PC-9 (cell line): ENCODE measurements at regions of chr22 and their contacts with region 1.

Region 1: GRCh38 chr22:50200461-50201190 is at the start of gene SELENOO:
- DNase-seq: peak; percentile 82 to 89
- H3K4me3 ChIP-seq: peak within 1 kb of the TSS; percentile 89
- H3K27ac ChIP-seq: no peak within 1 kb of the TSS
- H3K4me1 ChIP-seq: peaks cover 12% of the 10 kb centered on the region
- H3K27me3 ChIP-seq: no peaks in the 10 kb centered on the region
- CTCF ChIP-seq: no peak
- total RNA-seq, gene SELENOO: 27.4 and 36.2 TPM in 2 replicates

Region 2: DNA sequence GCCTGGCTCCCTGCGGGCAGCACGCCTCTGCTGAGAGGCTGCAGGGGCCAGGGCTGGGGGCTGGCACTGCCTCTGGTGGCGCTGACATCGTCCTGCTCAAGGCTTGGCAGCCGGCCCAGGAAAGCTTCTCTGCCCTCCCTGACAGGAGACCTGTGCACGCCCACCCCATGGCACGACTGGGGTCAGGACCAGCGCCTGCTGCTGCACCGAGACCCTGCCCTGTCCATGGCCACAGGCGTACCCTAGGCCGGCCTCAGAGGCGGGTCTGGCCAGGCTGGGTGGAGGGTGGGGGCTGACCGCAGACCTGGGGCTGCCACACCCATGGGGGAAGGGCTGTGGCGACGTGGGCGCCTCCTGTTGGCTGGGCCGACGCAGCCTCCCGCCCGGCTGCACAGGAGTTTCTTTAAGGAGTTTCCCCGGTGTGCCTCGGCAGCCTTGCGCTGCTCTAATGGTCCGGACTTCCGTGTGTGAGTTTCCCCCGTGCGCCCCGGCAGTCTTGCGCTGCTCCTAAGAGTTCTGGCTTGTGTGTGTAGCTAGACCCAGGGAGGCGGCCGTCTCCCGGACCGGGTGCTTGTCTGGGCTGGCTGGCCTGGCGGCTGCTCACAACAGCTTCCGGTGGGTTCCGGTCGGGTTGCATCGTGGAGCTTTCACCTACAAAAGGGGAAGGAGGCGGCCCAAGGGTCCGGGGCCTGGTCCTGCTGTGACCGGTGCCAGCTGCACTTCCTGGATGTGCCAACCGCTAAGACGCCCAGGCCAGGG is 10.3 kb before region 1 on chr22:
- CTCF ChIA-PET with region 1: no interaction called
- POLR2A ChIA-PET with region 1: no interaction called
- intact Hi-C with region 1: loop called (anchors 1 kb)
- DNase-seq: peak; percentile 81 to 89
- H3K4me3 ChIP-seq: peak overlapping the region; percentile 49; the same call in 1 of the 2 replicates
- H3K27ac ChIP-seq: peak overlapping the region; percentile 67
- H3K4me1 ChIP-seq: peaks cover 35% of the 10 kb centered on the region
- H3K27me3 ChIP-seq: no peaks in the 10 kb centered on the region
- CTCF ChIP-seq: peak; percentile 54; the same call in 1 of the 2 replicates